ENCODE measurements at regions of chr9 and their contacts with region 1.

Region 1: GRCh38 chr9:25830381-25830780 is 152.1 kb upstream of the TUSC1 start:
- DNase-seq: no peak
- H3K4me3 ChIP-seq: no peak overlapping the region
- H3K27ac ChIP-seq: no peak overlapping the region
- H3K4me1 ChIP-seq: no peaks in the 10 kb centered on the region
- H3K27me3 ChIP-seq: no peaks in the 10 kb centered on the region
- CTCF ChIP-seq: no peak
- POLR2A ChIP-seq: no peak

Region 2: DNA sequence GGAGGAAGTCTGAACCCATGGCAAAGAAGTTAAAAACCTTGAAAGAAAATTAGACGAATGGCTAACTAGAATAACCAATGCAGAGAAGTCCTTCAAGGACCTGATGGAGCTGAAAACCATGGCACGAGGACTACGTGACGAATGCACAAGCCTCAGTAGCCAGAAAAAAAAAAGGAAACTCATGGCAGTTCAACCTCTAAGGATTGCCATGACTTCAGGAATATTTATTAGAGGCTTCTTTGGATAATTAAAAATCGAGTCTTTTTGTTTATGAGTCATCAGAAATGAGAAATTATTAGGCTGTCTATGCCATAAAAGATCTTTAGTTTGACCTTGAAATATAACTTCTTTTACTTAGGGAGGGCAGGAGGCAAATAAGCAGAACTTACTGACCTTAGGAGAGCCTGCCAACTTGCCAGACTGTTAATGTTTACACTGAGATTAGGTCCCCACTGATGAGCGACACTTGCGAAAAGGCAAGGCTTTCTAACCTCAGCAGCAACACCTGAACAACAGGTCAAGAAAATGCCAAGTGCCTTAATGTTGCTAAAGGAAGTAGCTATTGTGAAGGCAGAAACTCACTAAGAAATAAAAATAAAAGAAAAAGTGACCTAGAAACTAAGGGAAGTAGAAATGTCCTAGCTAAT is 96.9 kb before region 1 on chr9:
- intact Hi-C with region 1: no loop called
- DNase-seq: no peak
- H3K4me3 ChIP-seq: no peak overlapping the region
- H3K27ac ChIP-seq: no peak overlapping the region
- H3K4me1 ChIP-seq: no peaks in the 10 kb centered on the region
- H3K27me3 ChIP-seq: no peaks in the 10 kb centered on the region
- CTCF ChIP-seq: no peak
- POLR2A ChIP-seq: no peak

Region 3: GRCh38 chr9:25857147-25857546 is 26.8 kb after region 1 on chr9:
- intact Hi-C with region 1: loop called (anchors 2 kb)
- DNase-seq: no peak
- H3K4me3 ChIP-seq: no peak overlapping the region
- H3K27ac ChIP-seq: no peak overlapping the region
- H3K4me1 ChIP-seq: no peaks in the 10 kb centered on the region
- H3K27me3 ChIP-seq: no peaks in the 10 kb centered on the region
- CTCF ChIP-seq: no peak
- POLR2A ChIP-seq: no peak

Region 4: GRCh38 chr9:26551971-26552370 is 721.6 kb after region 1 on chr9:
- intact Hi-C with region 1: loop called (anchors 5 kb)
- DNase-seq: no peak
- H3K4me3 ChIP-seq: no peak overlapping the region
- H3K27ac ChIP-seq: no peak overlapping the region
- H3K4me1 ChIP-seq: no peaks in the 10 kb centered on the region
- H3K27me3 ChIP-seq: no peaks in the 10 kb centered on the region
- CTCF ChIP-seq: no peak
- POLR2A ChIP-seq: no peak